Lower leg skin (tissue), 4 donors: ENCODE measurements at regions of chr5 and their contacts with region 1.

Region 1: GRCh38 chr5:10283927-10284635 is 23.6 kb downstream of the CMBL start:
- DNase-seq: peak; percentile 69 to 96
- H3K4me3 ChIP-seq: no peak overlapping the region
- CTCF ChIP-seq: peak in 1 of 3 donors; percentile 85
- POLR2A ChIP-seq: no peak

Region 2: GRCh38 chr5:10353241-10354047 is 69.4 kb after region 1 on chr5 and contains the start of gene MARCHF6:
- intact Hi-C with region 1: loop called (anchors 10 kb)
- DNase-seq: peak; percentile 91 to 99
- H3K4me3 ChIP-seq: peak within 1 kb of the TSS; percentile 92
- CTCF ChIP-seq: no peak
- POLR2A ChIP-seq: peak in 1 of 2 donors; percentile 20
- total RNA-seq, gene MARCHF6: 53.0 to 82.0 (median 63.3) TPM